OCI-LY7 (cell line): ENCODE measurements at regions of chr13 and their contacts with region 1.

Region 1: DNA sequence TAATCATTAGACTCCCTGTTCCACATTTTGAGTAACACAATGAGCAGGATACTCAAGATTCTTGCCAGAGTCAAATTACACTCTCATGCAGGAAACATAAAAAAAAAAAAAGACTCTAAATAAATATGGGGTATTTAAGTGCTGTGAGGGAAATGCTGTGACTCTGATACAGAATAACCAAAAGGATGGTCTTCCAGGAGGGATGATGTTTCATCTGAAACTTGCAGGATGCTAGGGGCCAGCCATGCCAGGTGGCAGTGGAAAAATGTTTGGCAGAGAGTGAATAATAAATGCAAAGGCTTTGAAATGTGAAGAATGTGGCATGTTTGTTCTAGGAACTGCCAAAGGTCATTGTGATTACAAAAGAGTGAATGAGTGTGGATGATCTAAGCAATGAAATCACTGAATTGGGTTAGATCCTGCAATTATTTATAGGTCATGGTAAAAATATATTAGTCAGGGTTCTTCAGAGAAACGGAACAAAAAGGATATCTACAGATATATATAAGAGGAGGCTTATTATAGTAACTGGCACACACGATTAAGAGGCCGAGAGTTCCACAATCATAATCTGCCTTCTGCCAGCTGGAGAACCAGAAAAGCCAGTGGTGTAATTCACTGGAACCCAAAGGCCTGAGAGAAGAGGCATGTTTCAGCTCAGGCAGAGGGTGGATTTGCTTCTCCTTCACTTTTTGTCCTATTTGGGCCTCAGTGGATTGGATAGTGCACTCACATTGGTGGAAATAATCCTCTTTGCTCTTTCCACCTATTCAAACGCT is 1832.8 kb upstream of the MIR17HG start:
- DNase-seq: no peak
- H3K4me3 ChIP-seq: no peak overlapping the region
- H3K27ac ChIP-seq: no peak overlapping the region
- H3K4me1 ChIP-seq: no peaks in the 10 kb centered on the region
- CTCF ChIP-seq: no peak

Region 2: DNA sequence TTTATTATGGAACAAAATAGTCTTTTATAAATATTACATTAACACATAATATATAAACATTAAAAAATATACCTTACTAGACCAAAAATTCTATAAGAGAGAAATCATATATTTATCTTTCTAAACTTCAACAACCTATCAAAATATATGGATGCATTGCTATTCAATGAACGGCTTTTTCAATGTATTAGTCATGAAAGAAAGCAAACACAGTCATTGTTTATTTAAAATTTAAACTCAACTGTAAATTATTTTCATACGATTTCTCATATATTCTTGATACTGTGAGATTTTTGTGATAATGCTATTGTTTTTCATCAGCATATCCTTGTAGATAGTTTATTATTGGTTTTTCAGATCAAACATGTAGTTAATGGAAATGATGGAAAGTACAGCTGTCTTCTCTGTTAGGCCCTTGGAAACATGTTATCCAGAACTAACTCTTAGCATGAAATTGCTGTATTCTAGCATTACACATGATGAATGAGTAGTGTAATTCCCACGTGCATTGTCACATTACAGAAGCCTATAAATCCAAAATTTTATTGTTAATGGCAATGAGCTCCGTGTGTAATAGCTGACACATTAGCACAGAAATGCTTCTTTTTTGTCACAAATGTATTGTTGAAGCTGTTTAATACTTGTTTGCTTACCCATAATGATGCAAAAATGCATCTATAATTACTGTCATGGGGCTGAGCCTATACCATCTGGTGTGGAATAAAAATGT is 203.6 kb before region 1 on chr13:
- CTCF ChIA-PET with region 1: no interaction called
- POLR2A ChIA-PET with region 1: no interaction called
- intact Hi-C with region 1: no loop called
- DNase-seq: no peak
- H3K4me3 ChIP-seq: no peak overlapping the region
- H3K27ac ChIP-seq: no peak overlapping the region
- H3K4me1 ChIP-seq: no peaks in the 10 kb centered on the region
- CTCF ChIP-seq: no peak

Region 3: GRCh38 chr13:89755729-89756492 is 241.2 kb after region 1 on chr13:
- CTCF ChIA-PET with region 1: no interaction called
- POLR2A ChIA-PET with region 1: interaction called, 11 read pairs
- intact Hi-C with region 1: no loop called
- DNase-seq: peak; percentile 19
- H3K4me3 ChIP-seq: no peak overlapping the region
- H3K27ac ChIP-seq: no peak overlapping the region
- H3K4me1 ChIP-seq: no peaks in the 10 kb centered on the region
- CTCF ChIP-seq: no peak